Activated CD8-positive, alpha-beta T cell treated with anti-CD3 and anti-CD28 coated beads, Interleukin-2, amount 10 ng/mL, durations not matched to agents 7 days and 5 days (primary cell): ENCODE measurements at regions of chr1 and their contacts with region 1.

Region 1: DNA sequence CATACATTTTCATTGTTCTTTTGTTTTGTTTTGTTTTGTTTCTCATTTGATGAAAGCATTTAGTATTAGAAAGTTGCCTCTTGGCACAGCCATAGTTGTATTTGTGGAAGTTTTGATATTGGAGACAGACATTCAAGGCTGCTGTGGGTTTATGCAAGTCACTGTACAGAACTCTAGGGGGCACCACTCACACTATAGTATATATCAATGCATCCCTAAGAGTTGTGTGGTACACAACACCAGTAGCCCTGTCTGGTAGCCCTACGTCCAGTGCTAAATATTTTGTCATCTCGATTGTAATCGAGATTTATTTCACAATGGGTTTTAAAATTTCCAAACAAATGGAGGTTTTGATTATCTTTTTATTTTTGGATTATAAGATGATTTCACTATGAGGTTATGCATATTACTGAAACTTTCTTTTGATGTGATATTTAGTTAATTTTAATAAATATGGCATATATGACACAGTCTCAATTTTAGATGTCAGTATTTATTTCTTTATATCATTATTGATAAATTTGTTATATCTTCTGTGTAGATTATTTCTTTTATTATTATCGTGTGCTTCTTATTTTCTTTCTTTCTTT is 112.2 kb downstream of the NR5A2 start:
- DNase-seq: peak; percentile 50
- ATAC-seq: peak; percentile 74
- H3K4me3 Mint-ChIP-seq: no peak overlapping the region
- H3K27ac Mint-ChIP-seq: no peak overlapping the region
- H3K4me1 Mint-ChIP-seq: no peaks in the 10 kb centered on the region
- H3K27me3 Mint-ChIP-seq: peaks cover 4% of the 10 kb centered on the region

Region 2: GRCh38 chr1:200128944-200129885 is 10.5 kb before region 1 on chr1:
- CTCF ChIA-PET with region 1: interaction called, 15 read pairs
- POLR2A ChIA-PET with region 1: no interaction called
- DNase-seq: peak; percentile 60
- ATAC-seq: peak; percentile 83
- H3K4me3 Mint-ChIP-seq: no peak overlapping the region
- H3K27ac Mint-ChIP-seq: peak overlapping the region; percentile 60
- H3K4me1 Mint-ChIP-seq: peaks cover 19% of the 10 kb centered on the region
- H3K27me3 Mint-ChIP-seq: no peaks in the 10 kb centered on the region

Region 3: DNA sequence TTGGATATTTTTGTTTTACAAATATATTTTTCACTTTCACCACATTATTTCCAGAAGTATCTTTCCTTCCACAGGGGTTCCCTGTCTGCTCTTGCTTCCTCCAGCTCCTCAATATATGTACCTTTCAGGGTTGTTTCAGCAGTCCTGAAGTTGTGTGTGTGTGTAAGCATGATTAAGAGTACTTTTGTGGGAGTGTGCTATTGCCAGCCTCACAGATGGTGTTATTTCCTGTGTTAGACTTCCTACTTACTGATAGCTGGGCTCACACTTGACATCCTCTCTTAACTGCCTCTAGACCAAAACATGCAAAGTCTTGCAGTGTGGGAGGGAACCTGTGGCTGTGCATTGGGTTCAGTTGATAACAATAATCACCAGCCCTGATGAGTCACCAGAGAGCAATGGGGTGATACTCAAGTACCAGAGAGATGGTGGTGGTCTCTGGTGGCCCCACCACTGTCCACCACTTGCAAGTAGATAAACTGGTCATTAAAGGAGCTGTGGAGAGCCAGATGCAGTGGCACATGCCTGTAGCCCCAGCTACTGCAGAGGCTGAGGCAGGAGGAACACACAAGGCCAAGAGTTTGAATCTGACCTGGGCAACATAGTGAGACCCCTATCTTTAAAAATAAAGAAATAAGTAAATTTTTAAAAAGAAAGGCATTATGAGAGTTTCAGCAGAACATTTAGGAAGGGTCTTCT is 14.5 kb after region 1 on chr1:
- CTCF ChIA-PET with region 1: interaction called, 14 read pairs
- POLR2A ChIA-PET with region 1: interaction called, 5 read pairs
- DNase-seq: peak; percentile 75
- ATAC-seq: peak; percentile 96
- H3K4me3 Mint-ChIP-seq: no peak overlapping the region
- H3K27ac Mint-ChIP-seq: peak overlapping the region; percentile 78
- H3K4me1 Mint-ChIP-seq: peaks cover 41% of the 10 kb centered on the region
- H3K27me3 Mint-ChIP-seq: peaks cover 3% of the 10 kb centered on the region

Region 4: DNA sequence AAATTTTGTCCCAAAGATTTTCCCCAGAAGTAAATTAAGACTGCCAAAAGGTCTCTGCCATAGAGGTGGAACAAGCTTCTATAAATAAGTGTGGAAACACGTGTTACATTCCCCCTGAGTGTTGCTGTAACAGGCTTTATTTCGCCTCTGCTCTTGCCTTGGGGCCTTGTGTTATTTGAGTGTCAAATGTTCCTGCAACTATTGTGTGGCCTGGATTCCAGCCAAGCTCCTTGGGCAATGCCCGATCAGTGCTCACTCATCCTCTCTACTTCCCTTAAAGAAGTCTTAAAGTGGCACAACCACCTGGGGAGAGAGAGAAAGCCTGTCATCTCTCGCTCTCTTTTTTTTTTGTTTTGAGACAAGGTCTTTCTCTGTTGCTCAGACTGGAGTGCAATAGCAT is 44.4 kb after region 1 on chr1:
- CTCF ChIA-PET with region 1: no interaction called
- POLR2A ChIA-PET with region 1: no interaction called
- DNase-seq: no peak
- ATAC-seq: no peak
- H3K4me3 Mint-ChIP-seq: no peak overlapping the region
- H3K27ac Mint-ChIP-seq: no peak overlapping the region
- H3K4me1 Mint-ChIP-seq: no peaks in the 10 kb centered on the region
- H3K27me3 Mint-ChIP-seq: peaks cover 11% of the 10 kb centered on the region

Region 5: DNA sequence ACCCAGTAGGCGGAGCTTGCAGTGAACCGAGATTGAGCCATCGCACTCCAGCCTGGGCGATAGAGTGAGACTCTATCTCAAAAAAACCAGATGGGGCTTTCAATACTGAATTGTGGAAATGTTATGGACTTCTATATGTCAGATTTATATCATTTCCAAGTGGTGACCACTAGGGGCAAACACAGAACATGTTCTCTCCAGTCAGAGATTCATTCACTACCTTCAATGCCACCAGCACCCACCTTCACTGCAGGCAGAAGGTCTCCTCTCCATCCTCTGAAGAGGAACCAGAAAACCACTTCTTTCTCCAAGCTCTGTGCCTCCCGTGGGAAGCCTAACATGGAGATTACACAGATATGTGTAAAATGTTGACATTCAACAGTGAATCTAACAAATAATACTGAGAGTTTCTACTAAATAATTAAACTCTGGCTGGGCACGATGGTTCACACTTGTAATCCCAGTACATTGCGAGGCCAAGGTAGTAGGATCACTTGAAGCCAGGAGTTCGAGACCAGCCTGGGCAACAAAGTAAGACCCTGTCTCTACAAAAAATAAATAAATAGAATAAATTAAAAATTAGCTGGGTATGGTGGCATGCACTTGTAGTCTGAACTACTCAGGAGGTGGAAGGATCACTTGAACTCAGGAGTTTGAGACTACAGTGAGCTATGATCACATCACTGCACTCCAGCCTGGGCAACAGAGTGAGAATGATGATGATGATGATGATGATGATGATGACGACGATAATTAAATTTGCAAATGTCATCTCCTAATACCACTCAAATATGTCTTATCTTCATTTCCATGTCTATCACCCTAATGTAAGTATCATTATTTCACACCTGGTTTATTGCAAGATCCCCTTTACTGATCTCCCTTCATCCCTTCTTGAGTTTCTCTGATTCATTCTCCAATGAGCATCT is 119.0 kb after region 1 on chr1:
- CTCF ChIA-PET with region 1: interaction called, 10 read pairs
- POLR2A ChIA-PET with region 1: no interaction called
- DNase-seq: no peak
- ATAC-seq: peak; percentile 53
- H3K4me3 Mint-ChIP-seq: no peak overlapping the region
- H3K27ac Mint-ChIP-seq: no peak overlapping the region
- H3K4me1 Mint-ChIP-seq: peaks cover 7% of the 10 kb centered on the region
- H3K27me3 Mint-ChIP-seq: peaks cover 4% of the 10 kb centered on the region

Region 6: GRCh38 chr1:200279810-200280411 is 140.2 kb after region 1 on chr1:
- CTCF ChIA-PET with region 1: interaction called, 13 read pairs
- POLR2A ChIA-PET with region 1: no interaction called
- DNase-seq: peak; percentile 40
- ATAC-seq: no peak
- H3K4me3 Mint-ChIP-seq: no peak overlapping the region
- H3K27ac Mint-ChIP-seq: no peak overlapping the region
- H3K4me1 Mint-ChIP-seq: no peaks in the 10 kb centered on the region
- H3K27me3 Mint-ChIP-seq: no peaks in the 10 kb centered on the region